AG04450 (cell line): ENCODE measurements at regions of chr7 and their contacts with region 1.

Region 1: GRCh38 chr7:149195180-149196150 is at the start of gene ZNF282:
- DNase-seq: peak; percentile 66
- H3K4me3 ChIP-seq: peak within 1 kb of the TSS; percentile 80
- H3K27ac ChIP-seq: peak within 1 kb of the TSS; percentile 73
- H3K27me3 ChIP-seq: no peaks in the 10 kb centered on the region
- CTCF ChIP-seq: peak; percentile 76
- polyA plus RNA-seq, gene ZNF282: 8.2 and 9.9 TPM in 2 replicates

Region 2: DNA sequence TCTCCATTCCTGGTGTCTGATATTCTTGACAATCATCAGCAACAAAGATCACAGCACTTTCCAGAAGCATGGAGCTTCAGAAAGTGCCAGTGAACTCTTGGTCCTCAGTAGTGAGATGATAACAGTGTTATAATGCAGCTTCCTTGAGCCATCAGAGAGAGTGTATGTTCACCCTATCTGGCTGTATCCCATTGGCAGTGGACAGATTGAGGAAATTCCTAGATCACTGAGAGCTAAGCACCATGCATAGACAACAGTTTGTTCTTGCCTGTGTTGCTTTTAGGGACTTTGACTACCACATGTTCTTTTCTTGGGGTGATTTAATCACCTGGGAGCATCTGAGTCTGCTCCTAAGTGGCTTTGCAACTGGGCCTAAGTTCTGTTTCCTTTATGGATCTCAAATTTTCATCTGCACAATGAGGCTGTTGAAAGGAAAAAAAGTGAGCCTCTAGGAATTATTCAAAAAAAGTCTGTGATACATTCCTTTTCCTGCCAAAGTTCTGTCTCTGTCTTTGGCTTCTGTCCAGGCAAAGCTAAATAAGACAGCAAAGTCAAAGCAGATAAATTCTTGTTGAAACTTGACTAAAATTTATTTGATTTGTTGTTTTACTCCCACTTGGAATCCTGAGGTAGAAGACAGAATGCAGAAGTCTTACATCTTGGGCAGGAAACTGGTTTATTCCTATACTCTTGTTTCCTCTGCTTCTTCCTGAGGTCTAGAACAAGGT is 14.6 kb before region 1 on chr7:
- CTCF ChIA-PET with region 1: interaction called, 13 read pairs
- POLR2A ChIA-PET with region 1: interaction called, 4 read pairs
- DNase-seq: no peak
- H3K4me3 ChIP-seq: no peak overlapping the region
- H3K27ac ChIP-seq: no peak overlapping the region
- H3K27me3 ChIP-seq: no peaks in the 10 kb centered on the region
- CTCF ChIP-seq: no peak

Region 3: DNA sequence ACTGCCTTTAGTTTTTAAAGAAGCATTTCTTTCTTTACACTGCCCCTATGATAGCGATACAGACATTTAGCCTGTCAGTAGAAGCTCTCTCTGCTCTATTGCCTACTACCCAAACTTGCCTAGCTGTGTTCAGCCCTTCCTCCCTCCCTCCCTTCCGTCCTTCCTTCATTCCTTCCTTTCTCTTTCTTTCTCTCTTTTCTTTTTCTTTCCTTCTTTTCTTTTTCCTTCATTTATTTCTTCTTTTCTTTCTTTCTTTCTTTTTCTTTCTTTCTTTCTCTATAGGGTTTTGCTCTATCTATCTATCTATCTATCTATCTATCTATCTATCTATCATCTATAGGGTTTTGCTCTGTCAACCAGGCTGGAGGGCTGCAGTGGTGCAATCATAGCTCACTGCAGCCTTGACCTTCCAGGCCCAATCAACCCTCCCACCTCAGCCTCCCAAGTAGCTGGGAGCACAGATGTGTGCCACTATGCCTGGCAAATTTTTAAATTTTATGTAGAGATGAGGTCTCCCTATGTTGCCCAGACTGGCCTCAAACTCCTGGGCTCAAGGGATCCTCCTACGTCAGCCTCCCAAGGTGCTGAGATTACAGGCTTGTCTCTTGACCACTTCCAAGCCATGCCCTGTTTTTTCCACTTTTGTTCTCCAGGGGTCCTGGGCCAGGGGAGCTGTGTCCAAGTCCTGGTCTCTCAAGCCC is 37.0 kb after region 1 on chr7:
- CTCF ChIA-PET with region 1: interaction called, 3 read pairs
- POLR2A ChIA-PET with region 1: interaction called, 12 read pairs
- DNase-seq: no peak
- H3K4me3 ChIP-seq: no peak overlapping the region
- H3K27ac ChIP-seq: peak overlapping the region; percentile 96
- H3K27me3 ChIP-seq: no peaks in the 10 kb centered on the region
- CTCF ChIP-seq: no peak